ENCODE measurements at regions of chr1 and their contacts with region 1.

Region 1: DNA sequence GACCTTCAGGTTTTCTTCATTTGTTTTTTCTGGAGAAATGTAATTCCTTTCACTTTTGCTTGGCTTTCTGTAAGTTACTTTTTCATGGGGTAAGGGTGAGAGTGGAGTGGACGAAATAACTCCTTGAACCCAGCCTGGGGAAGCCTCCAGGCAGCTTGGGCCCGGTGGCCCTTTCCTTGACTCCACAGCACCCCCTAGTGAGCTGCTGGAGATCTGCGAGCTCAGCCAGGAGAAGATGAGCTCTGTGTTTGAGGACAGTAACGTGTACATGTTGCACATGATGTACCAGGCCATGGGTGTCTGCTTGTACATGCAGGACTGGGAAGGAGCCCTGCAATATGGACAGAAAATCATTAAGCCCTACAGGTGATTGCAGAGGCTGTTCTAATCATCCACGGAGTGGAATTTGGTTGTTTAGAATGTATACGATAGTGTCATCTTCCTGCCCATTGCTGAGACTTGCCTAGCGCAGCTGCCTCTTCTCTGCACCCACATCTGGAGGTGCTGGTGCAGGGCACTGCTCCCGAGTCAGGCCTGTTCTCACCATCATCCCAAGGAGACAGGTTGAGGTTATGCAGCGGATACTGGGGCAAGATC is 51.0 kb downstream of the SMYD2 start:
- DNase-seq: peak in 1 of 2 donors; percentile 55
- H3K4me3 ChIP-seq: no peak overlapping the region
- H3K27ac ChIP-seq: peak overlapping the region in 2 of 5 donors; percentile 60 to 61
- H3K4me1 ChIP-seq: peaks cover 19 to 27% (median 24%) of the 10 kb centered on the region in 4 donors
- H3K27me3 ChIP-seq: no peaks in the 10 kb centered on the region
- CTCF ChIP-seq: peak in 4 of 7 experiments; percentile 38 to 60 (median 48)
- EP300 ChIP-seq: no peak
- POLR2A ChIP-seq: no peak

Region 2: GRCh38 chr1:214261206-214262123 is 70.5 kb before region 1 on chr1:
- intact Hi-C with region 1: loop called (anchors 5 kb)
- DNase-seq: peak; percentile 86 to 91
- H3K4me3 ChIP-seq: no peak overlapping the region
- H3K27ac ChIP-seq: no peak overlapping the region
- H3K4me1 ChIP-seq: peaks cover 0 to 7% (median 3%) of the 10 kb centered on the region in 4 donors
- H3K27me3 ChIP-seq: peaks cover 2 to 68% (median 21%) of the 10 kb centered on the region in 3 donors
- CTCF ChIP-seq: peak in 5 of 7 experiments; percentile 57 to 93 (median 81)
- EP300 ChIP-seq: no peak
- POLR2A ChIP-seq: no peak

Region 3: GRCh38 chr1:214584805-214585766 is 253.2 kb after region 1 on chr1:
- intact Hi-C with region 1: loop called (anchors 5 kb)
- DNase-seq: peak in 1 of 2 donors; percentile 52
- H3K4me3 ChIP-seq: no peak overlapping the region
- H3K27ac ChIP-seq: no peak overlapping the region
- H3K4me1 ChIP-seq: peaks cover 0 to 9% (median 0%) of the 10 kb centered on the region in 4 donors
- H3K27me3 ChIP-seq: no peaks in the 10 kb centered on the region
- CTCF ChIP-seq: peak in 5 of 7 experiments; percentile 48 to 81 (median 63)
- EP300 ChIP-seq: no peak
- POLR2A ChIP-seq: no peak